GM10248 (cell line): ENCODE measurements at regions of chr7 and their contacts with region 1.

Region 1: DNA sequence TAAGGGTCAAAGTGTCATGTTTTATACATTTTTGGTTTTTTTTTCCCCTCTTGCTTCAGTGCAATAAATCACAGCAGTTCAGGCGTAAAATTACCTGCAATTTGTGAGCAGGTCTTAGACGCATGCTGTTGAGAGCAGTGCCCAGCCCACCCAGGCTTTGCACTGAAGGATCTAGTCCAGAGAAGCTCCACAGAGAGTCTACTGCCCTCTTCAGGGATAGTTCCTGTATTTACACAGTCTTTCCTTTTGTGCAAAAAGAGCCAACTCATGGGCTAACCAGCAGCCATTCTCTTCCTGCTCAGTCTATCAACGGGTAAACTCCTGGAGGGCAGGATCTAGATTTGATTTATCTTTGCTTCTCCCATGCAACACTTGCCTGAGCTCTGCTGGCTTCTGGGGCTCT is 82.2 kb upstream of the NAMPT start:
- DNase-seq: peak; percentile 29
- CTCF ChIP-seq: peak; percentile 15

Region 2: DNA sequence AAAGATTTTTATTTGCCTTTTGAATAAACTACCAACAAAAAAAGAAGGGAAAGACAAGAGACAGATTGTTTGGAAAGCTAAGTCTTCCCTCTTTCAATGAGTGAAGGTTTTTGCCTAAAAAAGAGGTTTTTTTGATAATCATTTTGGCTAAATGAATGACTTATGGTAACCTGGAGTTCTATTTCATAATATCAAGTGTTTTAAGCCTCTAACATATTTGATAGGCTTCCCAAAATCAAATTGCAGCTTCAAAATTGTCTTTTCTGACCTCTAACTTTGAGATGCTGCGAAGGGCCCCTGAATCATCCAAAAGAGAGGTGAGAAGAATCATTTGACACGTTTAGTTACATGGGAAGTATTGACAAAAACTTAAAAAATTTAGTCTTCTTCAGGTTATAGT is 29.3 kb before region 1 on chr7:
- CTCF ChIA-PET with region 1: no interaction called
- POLR2A ChIA-PET with region 1: no interaction called
- DNase-seq: no peak
- CTCF ChIP-seq: no peak

Region 3: DNA sequence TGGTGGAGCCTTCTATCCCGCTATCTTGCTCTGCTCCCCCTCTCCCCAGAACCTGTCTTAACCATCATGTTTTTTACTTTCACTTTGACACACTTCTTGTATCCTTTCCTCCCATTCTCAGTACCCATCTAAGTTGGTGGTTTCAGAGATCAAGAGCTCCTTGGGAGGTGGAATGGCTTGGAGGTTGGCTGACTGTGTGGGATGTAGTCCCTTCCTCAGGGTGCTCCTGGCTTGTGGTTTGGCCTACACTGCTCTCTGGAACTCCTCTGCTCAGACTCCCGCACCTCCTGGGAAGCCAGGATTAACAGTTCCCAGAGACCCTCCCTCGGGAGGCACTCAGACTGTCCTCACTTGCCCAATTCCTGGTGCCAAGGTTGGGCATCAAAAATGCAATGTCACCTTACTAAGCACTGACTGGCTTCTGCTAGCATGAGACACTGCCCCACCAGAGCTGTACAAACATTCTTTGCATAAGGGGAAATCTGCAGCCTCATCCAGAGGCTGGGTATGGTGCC is 10.9 kb after region 1 on chr7:
- CTCF ChIA-PET with region 1: interaction called, 13 read pairs
- POLR2A ChIA-PET with region 1: no interaction called
- DNase-seq: no peak
- CTCF ChIP-seq: no peak